ENCODE measurements at regions of chr3 and their contacts with region 1.

Region 1: GRCh38 chr3:10213156-10213792 is 35.0 kb upstream of the TATDN2 start:
- DNase-seq: no peak
- ATAC-seq: no peak
- H3K4me3 Mint-ChIP-seq: no peak overlapping the region
- H3K27ac Mint-ChIP-seq: no peak overlapping the region
- H3K4me1 Mint-ChIP-seq: peaks cover 5% of the 10 kb centered on the region
- H3K27me3 Mint-ChIP-seq: no peaks in the 10 kb centered on the region
- CTCF ChIP-seq: no peak

Region 2: DNA sequence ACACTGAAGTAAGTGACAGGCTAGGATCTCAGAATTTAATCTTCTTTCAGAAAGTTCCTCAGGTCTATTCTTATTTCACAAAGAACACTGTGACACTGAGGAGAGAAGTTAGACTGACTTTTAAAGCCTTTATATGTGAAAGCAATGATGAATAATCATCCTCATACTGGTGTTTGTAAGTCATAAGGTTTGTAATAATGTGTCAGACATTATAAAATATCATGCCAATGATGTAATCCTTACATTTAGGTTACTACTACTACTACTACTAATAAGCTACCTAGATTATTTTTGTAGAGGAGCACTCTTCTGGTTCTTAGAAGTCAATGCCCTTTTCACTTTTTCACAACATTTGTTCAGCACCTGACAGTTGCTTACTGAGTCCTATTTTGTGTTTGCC is 138.6 kb before region 1 on chr3:
- CTCF ChIA-PET with region 1: no interaction called
- POLR2A ChIA-PET with region 1: no interaction called
- intact Hi-C with region 1: no loop called
- DNase-seq: no peak
- ATAC-seq: no peak
- H3K4me3 Mint-ChIP-seq: no peak overlapping the region
- H3K27ac Mint-ChIP-seq: no peak overlapping the region
- H3K4me1 Mint-ChIP-seq: peaks cover 3% of the 10 kb centered on the region
- H3K27me3 Mint-ChIP-seq: no peaks in the 10 kb centered on the region
- CTCF ChIP-seq: no peak

Region 3: DNA sequence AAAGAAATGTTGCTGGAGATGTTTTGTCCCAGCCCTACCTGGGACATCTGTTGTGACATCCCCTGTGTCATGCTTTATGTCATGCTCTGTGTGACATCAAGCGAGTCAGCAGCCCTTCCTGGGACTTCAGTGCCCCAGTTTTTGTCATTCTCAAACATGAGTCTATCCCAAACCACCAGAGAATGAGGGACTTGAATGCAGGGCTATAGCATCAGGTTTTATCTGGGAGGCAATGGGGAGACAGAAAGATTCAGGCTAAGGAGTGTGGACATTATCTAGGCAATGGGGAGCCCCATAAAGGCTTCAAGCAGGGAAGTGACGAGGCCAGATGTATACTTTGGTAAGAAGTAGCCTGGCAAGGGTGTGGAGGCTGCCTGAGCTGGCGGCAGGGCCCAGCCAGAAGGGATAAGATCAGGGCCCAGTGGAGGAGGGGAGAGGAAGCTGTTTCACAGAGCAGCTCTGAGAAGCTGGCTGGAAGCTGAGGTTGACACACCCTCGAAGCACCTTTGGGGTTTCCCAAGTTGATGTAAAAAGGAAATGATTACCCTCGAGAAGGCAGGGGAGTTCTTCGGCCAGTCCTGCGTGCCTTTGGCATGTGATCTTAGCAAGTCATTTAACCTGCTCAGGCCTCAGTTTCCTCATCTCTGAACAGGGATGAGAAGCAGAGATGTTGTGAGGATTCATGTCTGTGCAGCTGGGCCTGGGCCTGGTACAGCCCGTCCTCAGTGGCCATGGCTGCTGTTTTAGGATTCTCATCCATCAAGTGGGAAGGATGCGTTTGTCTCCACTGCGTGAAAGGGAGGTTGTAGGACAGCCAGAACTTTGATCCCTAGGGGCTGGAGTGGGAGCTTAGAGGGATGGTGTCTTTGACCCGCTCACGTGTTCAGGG is 14.3 kb before region 1 on chr3:
- CTCF ChIA-PET with region 1: interaction called, 4 read pairs
- POLR2A ChIA-PET with region 1: interaction called, 13 read pairs
- intact Hi-C with region 1: no loop called
- DNase-seq: peak; percentile 89
- ATAC-seq: peak; percentile 87
- H3K4me3 Mint-ChIP-seq: peak overlapping the region; percentile 6
- H3K27ac Mint-ChIP-seq: peak overlapping the region; percentile 94
- H3K4me1 Mint-ChIP-seq: peaks cover 67% of the 10 kb centered on the region
- H3K27me3 Mint-ChIP-seq: no peaks in the 10 kb centered on the region
- CTCF ChIP-seq: no peak

Measured in activated CD8-positive, alpha-beta T cell treated with anti-CD3 and anti-CD28 coated beads for 36 hours (primary cell).